Vagina (tissue), 2 donors: ENCODE measurements at regions of chr19 and their contacts with region 1.

Region 1: GRCh38 chr19:17282488-17283255 is 971 bp downstream of the ANKLE1 start:
- DNase-seq: no peak
- H3K4me3 ChIP-seq: peak overlapping the region; percentile 27 to 32
- H3K27ac ChIP-seq: no peak overlapping the region
- H3K4me1 ChIP-seq: peaks cover 16% of the 10 kb centered on the region
- H3K27me3 ChIP-seq: no peaks in the 10 kb centered on the region
- CTCF ChIP-seq: peak; percentile 76 to 92 (median 91)
- POLR2A ChIP-seq: no peak

Region 2: DNA sequence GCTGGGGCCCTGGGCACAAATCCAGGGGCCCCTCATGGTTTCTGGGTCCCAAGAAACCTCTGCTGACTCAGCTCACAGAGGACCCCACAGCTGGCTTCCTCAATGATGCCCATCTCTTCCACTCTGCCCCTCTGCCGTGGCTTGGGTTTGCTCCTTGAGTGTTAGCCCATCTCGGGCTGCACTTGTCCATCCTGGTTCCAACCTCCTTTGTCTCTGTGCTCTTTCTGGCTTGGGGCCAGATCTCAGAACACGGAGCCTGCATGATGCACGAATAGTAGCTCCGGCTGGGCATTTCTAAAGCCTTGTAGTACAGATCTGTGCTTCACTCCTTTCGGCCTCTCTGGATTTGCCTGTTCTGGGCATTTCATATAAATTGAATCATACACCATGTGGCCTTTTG is 340.1 kb before region 1 on chr19:
- intact Hi-C with region 1: no loop called
- DNase-seq: no peak
- H3K4me3 ChIP-seq: no peak overlapping the region
- H3K27ac ChIP-seq: no peak overlapping the region
- H3K4me1 ChIP-seq: no peaks in the 10 kb centered on the region
- H3K27me3 ChIP-seq: no peaks in the 10 kb centered on the region
- CTCF ChIP-seq: no peak
- POLR2A ChIP-seq: no peak

Region 3: GRCh38 chr19:17069218-17069617 is 213.5 kb before region 1 on chr19:
- intact Hi-C with region 1: loop called (anchors 5 kb)
- DNase-seq: no peak
- H3K4me3 ChIP-seq: no peak overlapping the region
- H3K27ac ChIP-seq: no peak overlapping the region
- H3K4me1 ChIP-seq: peaks cover 7% of the 10 kb centered on the region
- H3K27me3 ChIP-seq: no peaks in the 10 kb centered on the region
- CTCF ChIP-seq: no peak
- POLR2A ChIP-seq: no peak

Region 4: GRCh38 chr19:17215125-17215971 is 67.3 kb before region 1 on chr19 and contains the start of gene USE1:
- intact Hi-C with region 1: no loop called
- DNase-seq: peak in 1 of 2 donors; percentile 93
- H3K4me3 ChIP-seq: peak within 1 kb of the TSS; percentile 74 to 82
- H3K27ac ChIP-seq: peak within 1 kb of the TSS; percentile 92
- H3K4me1 ChIP-seq: peaks cover 22% of the 10 kb centered on the region
- H3K27me3 ChIP-seq: no peaks in the 10 kb centered on the region
- CTCF ChIP-seq: no peak
- POLR2A ChIP-seq: no peak
- total RNA-seq, gene USE1: 30.9 TPM

Region 5: GRCh38 chr19:17226002-17226933 is 56.4 kb before region 1 on chr19 and contains the start of gene OCEL1:
- intact Hi-C with region 1: no loop called
- DNase-seq: peak in 1 of 2 donors; percentile 98
- H3K4me3 ChIP-seq: peak within 1 kb of the TSS; percentile 64 to 68
- H3K27ac ChIP-seq: peak within 1 kb of the TSS; percentile 91
- H3K4me1 ChIP-seq: peaks cover 22% of the 10 kb centered on the region
- H3K27me3 ChIP-seq: no peaks in the 10 kb centered on the region
- CTCF ChIP-seq: no peak
- POLR2A ChIP-seq: peak in 1 of 2 donors; percentile 81
- total RNA-seq, gene OCEL1: 24.1 TPM

Region 6: DNA sequence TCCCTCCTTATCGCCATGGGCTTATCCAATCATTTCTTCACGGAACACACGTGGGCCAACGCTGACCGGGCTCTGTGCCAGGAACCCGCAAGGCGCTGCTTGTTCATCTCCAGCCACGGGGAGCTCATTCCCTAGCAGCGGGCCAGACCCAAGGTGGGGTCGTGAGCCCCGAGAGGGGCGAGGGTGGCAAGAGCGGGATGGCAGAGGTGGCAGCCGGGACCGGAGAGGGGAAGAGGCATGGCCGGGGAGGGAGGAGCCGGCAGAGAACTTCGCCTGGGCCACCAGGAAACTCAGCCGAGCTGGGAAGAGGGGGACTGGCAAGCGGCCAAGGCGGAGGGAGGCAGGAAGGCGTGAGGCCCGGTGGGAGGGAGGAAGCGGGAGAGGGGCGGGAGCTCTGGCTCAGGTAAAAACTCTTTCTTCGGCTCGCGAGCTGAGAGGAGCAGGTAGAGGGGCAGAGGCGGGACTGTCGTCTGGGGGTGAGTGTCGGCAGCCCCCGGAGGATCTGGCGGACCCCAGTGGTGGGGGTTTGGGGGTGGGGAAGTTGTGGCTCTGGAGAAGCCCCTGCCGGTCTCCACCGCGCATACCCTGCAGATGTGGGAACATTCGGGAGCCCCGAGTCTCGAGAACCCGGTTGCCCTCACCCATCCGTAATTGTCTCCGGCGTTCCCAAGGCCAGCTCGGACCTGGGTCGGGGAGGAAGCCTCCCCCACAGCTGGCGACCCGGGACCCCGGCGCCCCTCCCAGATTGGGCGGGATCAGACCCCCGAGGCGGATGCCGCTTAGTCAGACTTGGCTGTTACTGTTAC is 512.3 kb after region 1 on chr19 and contains the start of gene B3GNT3:
- intact Hi-C with region 1: no loop called
- DNase-seq: no peak
- H3K4me3 ChIP-seq: no peak within 1 kb of the TSS
- H3K27ac ChIP-seq: no peak within 1 kb of the TSS
- H3K4me1 ChIP-seq: no peaks in the 10 kb centered on the region
- H3K27me3 ChIP-seq: no peaks in the 10 kb centered on the region
- CTCF ChIP-seq: no peak
- POLR2A ChIP-seq: no peak
- total RNA-seq, gene B3GNT3: 1.5 TPM